ENCODE measurements at regions of chr3 and their contacts with region 1.

Region 1: GRCh38 chr3:57992452-57993213 is 15.6 kb upstream of the FLNB start:
- DNase-seq: peak; percentile 84 to 93
- H3K4me3 ChIP-seq: no peak overlapping the region
- H3K4me3 Mint-ChIP-seq: peak overlapping the region; percentile 28
- H3K27ac Mint-ChIP-seq: peak overlapping the region; percentile 43
- H3K4me1 ChIP-seq: peaks cover 66% of the 10 kb centered on the region
- H3K4me1 Mint-ChIP-seq: peaks cover 27% of the 10 kb centered on the region
- H3K27me3 ChIP-seq: no peaks in the 10 kb centered on the region
- H3K27me3 Mint-ChIP-seq: no peaks in the 10 kb centered on the region
- CTCF ChIP-seq: no peak

Region 2: GRCh38 chr3:57977818-57978235 is 14.8 kb before region 1 on chr3:
- CTCF ChIA-PET with region 1: no interaction called
- POLR2A ChIA-PET with region 1: interaction called, 3 read pairs
- intact Hi-C with region 1: loop called (anchors 1 kb)
- DNase-seq: peak; percentile 77 to 86
- H3K4me3 ChIP-seq: no peak overlapping the region
- H3K4me3 Mint-ChIP-seq: peak overlapping the region; percentile 44
- H3K27ac Mint-ChIP-seq: peak overlapping the region; percentile 53
- H3K4me1 ChIP-seq: peaks cover 67% of the 10 kb centered on the region
- H3K4me1 Mint-ChIP-seq: peaks cover 23% of the 10 kb centered on the region
- H3K27me3 ChIP-seq: no peaks in the 10 kb centered on the region
- H3K27me3 Mint-ChIP-seq: no peaks in the 10 kb centered on the region
- CTCF ChIP-seq: no peak

Region 3: GRCh38 chr3:58025837-58026569 is 33.4 kb after region 1 on chr3:
- CTCF ChIA-PET with region 1: no interaction called
- POLR2A ChIA-PET with region 1: no interaction called
- intact Hi-C with region 1: no loop called
- DNase-seq: no peak
- H3K4me3 ChIP-seq: no peak overlapping the region
- H3K4me3 Mint-ChIP-seq: no peak overlapping the region
- H3K27ac Mint-ChIP-seq: peak overlapping the region; percentile 14
- H3K4me1 ChIP-seq: peaks cover 32% of the 10 kb centered on the region
- H3K4me1 Mint-ChIP-seq: peaks cover 37% of the 10 kb centered on the region
- H3K27me3 ChIP-seq: no peaks in the 10 kb centered on the region
- H3K27me3 Mint-ChIP-seq: no peaks in the 10 kb centered on the region
- CTCF ChIP-seq: no peak

Measured in Caco-2 (cell line).